ENCODE measurements at regions of chr22 and their contacts with region 1.

Region 1: GRCh38 chr22:48883211-48883960 is 944.3 kb downstream of the BRD1 start:
- DNase-seq: no peak
- ATAC-seq: no peak
- H3K4me3 ChIP-seq: no peak overlapping the region
- H3K27ac ChIP-seq: no peak overlapping the region
- H3K4me1 ChIP-seq: no peaks in the 10 kb centered on the region
- H3K27me3 ChIP-seq: peaks cover 0 to 1% of the 10 kb centered on the region in 2 experiments; a peak in 1 of 5 replicates
- CTCF ChIP-seq: no peak
- EP300 ChIP-seq: no peak
- POLR2A ChIP-seq: no peak
- RAD21 ChIP-seq: no peak

Region 2: DNA sequence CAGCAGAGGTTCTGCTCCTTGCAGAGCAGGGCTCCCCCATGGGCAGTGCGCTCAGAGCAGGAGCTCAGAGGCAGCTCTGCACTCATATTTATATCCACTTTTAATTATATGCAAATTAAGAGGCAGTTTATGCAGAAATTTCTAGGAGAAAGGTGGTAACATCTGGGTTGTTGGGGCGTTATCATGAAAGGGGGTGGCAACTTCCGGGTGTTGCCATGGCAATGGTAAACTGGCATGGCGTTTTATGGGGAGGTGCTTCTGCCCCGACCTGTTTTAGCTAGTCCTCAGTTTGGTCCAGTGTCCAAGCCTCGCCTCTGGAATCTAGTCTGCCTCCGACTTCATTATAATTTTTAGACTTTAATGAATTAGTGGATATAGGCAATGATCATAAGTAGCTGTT is 929.3 kb before region 1 on chr22:
- CTCF ChIA-PET with region 1: no interaction called
- POLR2A ChIA-PET with region 1: no interaction called
- in situ Hi-C with region 1: no loop called
- intact Hi-C with region 1: no loop called
- DNase-seq: no peak
- ATAC-seq: no peak
- H3K4me3 ChIP-seq: no peak overlapping the region
- H3K27ac ChIP-seq: no peak overlapping the region
- H3K4me1 ChIP-seq: no peaks in the 10 kb centered on the region
- H3K27me3 ChIP-seq: peaks cover 0 to 11% of the 10 kb centered on the region in 2 experiments; a peak in 2 of 5 replicates
- CTCF ChIP-seq: no peak
- EP300 ChIP-seq: no peak
- POLR2A ChIP-seq: no peak
- RAD21 ChIP-seq: no peak

Region 3: DNA sequence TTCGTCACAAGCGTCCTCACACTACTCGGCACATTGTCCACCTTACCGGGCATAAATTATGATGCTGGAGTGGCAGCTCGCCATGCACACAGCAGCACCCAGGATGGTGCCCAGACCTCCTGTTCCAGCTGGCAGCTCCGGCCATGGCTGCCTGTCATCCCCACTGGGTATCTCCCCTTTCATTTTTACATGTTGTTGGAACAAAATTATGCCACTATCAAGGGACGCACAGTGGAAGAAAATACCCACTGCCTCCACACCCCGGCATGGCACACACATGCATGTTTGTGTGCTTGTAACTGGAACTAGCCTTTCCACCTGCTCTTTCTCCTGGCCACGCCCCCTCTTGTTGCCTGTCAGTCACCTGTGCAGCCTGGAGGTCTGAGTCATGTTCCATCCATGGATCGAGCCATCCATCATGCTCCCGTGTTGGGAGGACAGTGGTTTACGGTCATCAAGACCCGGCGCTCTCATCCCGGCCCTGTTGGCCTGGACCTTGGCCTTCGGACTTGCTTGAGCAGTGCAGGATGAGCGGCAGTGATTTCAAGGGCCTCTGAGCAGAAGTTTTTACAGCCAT is 125.3 kb before region 1 on chr22:
- CTCF ChIA-PET with region 1: no interaction called
- POLR2A ChIA-PET with region 1: no interaction called
- in situ Hi-C with region 1: no loop called
- intact Hi-C with region 1: no loop called
- DNase-seq: no peak
- ATAC-seq: no peak
- H3K4me3 ChIP-seq: no peak overlapping the region
- H3K27ac ChIP-seq: no peak overlapping the region
- H3K4me1 ChIP-seq: no peaks in the 10 kb centered on the region
- H3K27me3 ChIP-seq: no peaks in the 10 kb centered on the region
- CTCF ChIP-seq: no peak
- EP300 ChIP-seq: no peak
- POLR2A ChIP-seq: no peak
- RAD21 ChIP-seq: no peak

Region 4: GRCh38 chr22:48849963-48850657 is 33.3 kb before region 1 on chr22:
- CTCF ChIA-PET with region 1: no interaction called
- POLR2A ChIA-PET with region 1: no interaction called
- in situ Hi-C with region 1: no loop called
- intact Hi-C with region 1: loop called (anchors 2 kb)
- DNase-seq: no peak
- ATAC-seq: no peak
- H3K4me3 ChIP-seq: no peak overlapping the region
- H3K27ac ChIP-seq: no peak overlapping the region
- H3K4me1 ChIP-seq: peaks cover 14% of the 10 kb centered on the region
- H3K27me3 ChIP-seq: peaks cover 0 to 13% of the 10 kb centered on the region in 2 experiments; a peak in 1 of 5 replicates
- CTCF ChIP-seq: no peak
- EP300 ChIP-seq: no peak
- POLR2A ChIP-seq: no peak
- RAD21 ChIP-seq: no peak